ENCODE measurements at regions of chr10 and their contacts with region 1.

Region 1: GRCh38 chr10:43348511-43349312 is 22.7 kb upstream of the FXYD4 start:
- DNase-seq: peak; percentile 72 to 86 (median 83)
- ATAC-seq: peak; percentile 100
- H3K4me3 ChIP-seq: no peak overlapping the region
- H3K4me3 Mint-ChIP-seq: peak overlapping the region in 1 of 10 donors; percentile 6
- H3K27ac ChIP-seq: no peak overlapping the region
- H3K27ac Mint-ChIP-seq: peak overlapping the region in 5 of 9 donors; percentile 4 to 53 (median 36)
- H3K4me1 ChIP-seq: peaks cover 9% of the 10 kb centered on the region in 2 donors
- H3K4me1 Mint-ChIP-seq: peaks cover 9 to 42% (median 13%) of the 10 kb centered on the region in 7 donors
- H3K27me3 ChIP-seq: no peaks in the 10 kb centered on the region
- H3K27me3 Mint-ChIP-seq: peaks cover 0 to 22% (median 6%) of the 10 kb centered on the region in 5 donors

Region 2: DNA sequence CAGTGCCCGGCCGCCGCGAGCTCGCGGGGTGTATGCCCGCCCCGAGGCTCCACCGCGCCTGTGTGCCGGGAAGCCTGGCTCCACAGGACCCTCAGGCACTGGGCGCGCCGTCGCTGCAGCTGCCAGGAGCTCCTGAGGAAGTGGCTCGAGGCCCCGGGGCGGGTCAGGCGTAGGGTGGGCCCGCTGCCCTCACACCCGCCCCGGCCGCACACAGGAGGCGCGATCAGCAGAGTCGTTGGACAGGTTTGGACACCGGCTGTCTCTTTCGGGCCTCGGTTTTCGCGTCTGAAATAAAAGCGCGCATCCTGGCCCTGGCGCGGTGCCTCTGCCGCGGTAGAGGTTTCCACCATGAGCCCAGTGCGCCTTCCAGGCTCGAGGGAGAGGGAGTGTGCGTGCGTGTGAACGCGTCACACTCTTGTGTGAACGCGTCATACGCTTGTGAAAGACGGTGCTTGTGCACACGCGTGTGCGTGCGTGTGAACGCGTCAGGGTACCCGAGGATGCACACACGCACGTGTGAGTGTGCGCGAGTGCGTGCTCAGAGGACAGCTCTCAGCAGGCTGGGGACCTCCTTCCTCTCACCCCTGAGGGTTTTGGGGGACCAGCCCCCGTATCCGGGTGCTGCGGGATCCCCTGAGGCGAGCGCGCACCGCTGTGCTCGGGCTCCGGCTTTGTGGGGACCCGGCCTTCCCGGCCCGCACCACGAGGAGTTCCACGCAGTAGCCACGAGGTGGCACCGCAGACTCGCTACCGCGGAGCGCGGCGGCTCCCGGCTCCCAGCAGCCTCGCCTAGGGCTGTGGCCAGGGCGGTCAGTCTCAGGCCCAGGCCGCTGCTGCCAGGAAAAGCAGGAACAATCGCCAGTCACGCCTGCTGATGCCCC is 482.4 kb before region 1 on chr10:
- CTCF ChIA-PET with region 1: no interaction called
- POLR2A ChIA-PET with region 1: no interaction called
- intact Hi-C with region 1: loop called in 1 of 2 experiments (anchors 2 kb)
- DNase-seq: peak; percentile 26 to 56 (median 36)
- ATAC-seq: peak; percentile 82
- H3K4me3 ChIP-seq: no peak overlapping the region
- H3K4me3 Mint-ChIP-seq: peak overlapping the region in 5 of 10 donors; percentile 45 to 64 (median 51)
- H3K27ac ChIP-seq: no peak overlapping the region
- H3K27ac Mint-ChIP-seq: no peak overlapping the region
- H3K4me1 ChIP-seq: no peaks in the 10 kb centered on the region
- H3K4me1 Mint-ChIP-seq: peaks cover 0 to 11% (median 7%) of the 10 kb centered on the region in 7 donors
- H3K27me3 ChIP-seq: no peaks in the 10 kb centered on the region
- H3K27me3 Mint-ChIP-seq: peaks cover 27 to 45% (median 43%) of the 10 kb centered on the region in 5 donors

Region 3: GRCh38 chr10:43265799-43266721 is 82.7 kb before region 1 on chr10:
- CTCF ChIA-PET with region 1: interaction called, 8 read pairs
- POLR2A ChIA-PET with region 1: no interaction called
- intact Hi-C with region 1: loop called (anchors 1 kb)
- DNase-seq: peak in 2 of 9 donors; percentile 21 to 31
- ATAC-seq: peak; percentile 56
- H3K4me3 ChIP-seq: peak overlapping the region; percentile 53
- H3K4me3 Mint-ChIP-seq: peak overlapping the region; percentile 65 to 84 (median 74)
- H3K27ac ChIP-seq: no peak overlapping the region
- H3K27ac Mint-ChIP-seq: peak overlapping the region in 1 of 9 donors; percentile 52
- H3K4me1 ChIP-seq: peaks cover 0 to 4% of the 10 kb centered on the region in 2 donors
- H3K4me1 Mint-ChIP-seq: peaks cover 0 to 12% (median 4%) of the 10 kb centered on the region in 7 donors
- H3K27me3 ChIP-seq: peaks cover 0 to 11% of the 10 kb centered on the region in 2 donors
- H3K27me3 Mint-ChIP-seq: peaks cover 46 to 59% (median 54%) of the 10 kb centered on the region in 5 donors

Region 4: GRCh38 chr10:43292755-43293676 is 55.7 kb before region 1 on chr10:
- CTCF ChIA-PET with region 1: interaction called, 76 read pairs
- POLR2A ChIA-PET with region 1: interaction called, 18 read pairs
- intact Hi-C with region 1: loop called (anchors 1 kb)
- DNase-seq: peak in 6 of 9 donors; percentile 22 to 51 (median 44)
- ATAC-seq: peak; percentile 72
- H3K4me3 ChIP-seq: no peak overlapping the region
- H3K4me3 Mint-ChIP-seq: peak overlapping the region; percentile 13 to 75 (median 55)
- H3K27ac ChIP-seq: no peak overlapping the region
- H3K27ac Mint-ChIP-seq: peak overlapping the region in 6 of 9 donors; percentile 65 to 84 (median 78)
- H3K4me1 ChIP-seq: peaks cover 31 to 35% of the 10 kb centered on the region in 2 donors
- H3K4me1 Mint-ChIP-seq: peaks cover 16 to 83% (median 34%) of the 10 kb centered on the region in 7 donors
- H3K27me3 ChIP-seq: no peaks in the 10 kb centered on the region
- H3K27me3 Mint-ChIP-seq: peaks cover 0 to 15% (median 6%) of the 10 kb centered on the region in 5 donors

Region 5: DNA sequence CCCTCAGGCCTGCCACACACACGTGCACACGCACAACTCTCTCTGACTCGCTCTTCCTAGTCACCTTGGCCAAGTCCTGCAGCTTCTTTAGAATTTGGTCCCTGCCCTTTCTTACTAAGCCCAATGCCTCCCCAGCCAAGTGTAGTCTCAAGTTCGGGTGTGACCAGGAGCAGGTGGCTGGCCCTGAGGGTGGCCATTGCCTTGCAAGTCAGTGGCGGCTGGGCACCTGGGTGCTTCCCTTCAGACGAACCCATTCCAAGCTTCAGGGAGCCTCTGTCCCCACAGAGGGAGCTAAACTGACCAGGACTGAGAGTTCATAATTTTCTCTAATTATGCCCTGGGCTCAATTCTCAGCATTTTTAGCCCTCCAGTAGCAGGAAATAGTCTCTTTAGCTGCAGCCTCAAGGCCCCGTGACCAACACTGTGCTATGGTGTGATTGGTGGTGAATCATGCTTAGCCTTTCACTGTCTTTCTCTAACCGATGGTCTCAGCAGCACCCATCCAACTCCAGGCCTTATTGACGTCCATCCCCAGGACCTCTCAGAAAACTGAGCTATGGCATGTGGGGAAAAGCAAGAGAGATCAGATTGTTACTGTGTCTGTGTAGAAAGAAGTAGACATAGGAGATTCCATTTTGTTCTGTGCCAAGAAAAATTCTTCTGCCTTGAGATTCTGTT is 11.9 kb before region 1 on chr10:
- CTCF ChIA-PET with region 1: interaction called, 7 read pairs
- POLR2A ChIA-PET with region 1: no interaction called
- intact Hi-C with region 1: loop called in 1 of 2 experiments (anchors 2 kb)
- DNase-seq: no peak
- ATAC-seq: no peak
- H3K4me3 ChIP-seq: no peak overlapping the region
- H3K4me3 Mint-ChIP-seq: no peak overlapping the region
- H3K27ac ChIP-seq: no peak overlapping the region
- H3K27ac Mint-ChIP-seq: no peak overlapping the region
- H3K4me1 ChIP-seq: peaks cover 11 to 12% of the 10 kb centered on the region in 2 donors
- H3K4me1 Mint-ChIP-seq: peaks cover 14 to 51% (median 18%) of the 10 kb centered on the region in 7 donors
- H3K27me3 ChIP-seq: no peaks in the 10 kb centered on the region
- H3K27me3 Mint-ChIP-seq: peaks cover 5 to 29% (median 12%) of the 10 kb centered on the region in 5 donors

Region 6: GRCh38 chr10:43491855-43492254 is 143.1 kb after region 1 on chr10:
- CTCF ChIA-PET with region 1: no interaction called
- POLR2A ChIA-PET with region 1: no interaction called
- intact Hi-C with region 1: no loop called
- DNase-seq: no peak
- ATAC-seq: no peak
- H3K4me3 ChIP-seq: no peak overlapping the region
- H3K4me3 Mint-ChIP-seq: no peak overlapping the region
- H3K27ac ChIP-seq: no peak overlapping the region
- H3K27ac Mint-ChIP-seq: no peak overlapping the region
- H3K4me1 ChIP-seq: no peaks in the 10 kb centered on the region
- H3K4me1 Mint-ChIP-seq: peaks cover 0 to 3% (median 0%) of the 10 kb centered on the region in 7 donors
- H3K27me3 ChIP-seq: peaks cover 0 to 3% of the 10 kb centered on the region in 2 donors
- H3K27me3 Mint-ChIP-seq: peaks cover 0 to 5% (median under 1%) of the 10 kb centered on the region in 5 donors

Region 7: DNA sequence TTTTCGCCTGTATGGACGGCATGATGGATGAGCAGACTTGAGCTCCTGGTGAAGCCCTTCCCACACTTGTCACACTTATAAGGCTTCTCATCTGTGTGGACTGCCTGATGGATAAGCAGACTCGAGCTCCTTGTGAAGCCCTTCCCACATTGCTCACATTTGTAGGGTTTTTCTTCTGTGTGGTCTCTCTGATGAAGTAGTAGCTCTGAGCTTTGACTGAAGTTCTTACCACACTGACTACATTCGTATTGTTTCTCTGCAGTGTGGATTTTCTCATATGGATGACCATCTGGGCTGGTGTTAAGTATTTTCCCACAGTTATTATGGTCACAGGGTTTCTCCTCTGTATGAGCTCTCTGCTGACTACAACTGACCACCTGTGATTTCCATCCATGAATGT is 208.5 kb after region 1 on chr10:
- CTCF ChIA-PET with region 1: no interaction called
- POLR2A ChIA-PET with region 1: no interaction called
- intact Hi-C with region 1: no loop called
- DNase-seq: no peak
- ATAC-seq: no peak
- H3K4me3 ChIP-seq: no peak overlapping the region
- H3K4me3 Mint-ChIP-seq: no peak overlapping the region
- H3K27ac ChIP-seq: no peak overlapping the region
- H3K27ac Mint-ChIP-seq: no peak overlapping the region
- H3K4me1 ChIP-seq: no peaks in the 10 kb centered on the region
- H3K4me1 Mint-ChIP-seq: no peaks in the 10 kb centered on the region
- H3K27me3 ChIP-seq: no peaks in the 10 kb centered on the region
- H3K27me3 Mint-ChIP-seq: no peaks in the 10 kb centered on the region

Measured in naive thymus-derived CD4-positive, alpha-beta T cell (primary cell).